ENCODE measurements at regions of chr10 and their contacts with region 1.

Region 1: DNA sequence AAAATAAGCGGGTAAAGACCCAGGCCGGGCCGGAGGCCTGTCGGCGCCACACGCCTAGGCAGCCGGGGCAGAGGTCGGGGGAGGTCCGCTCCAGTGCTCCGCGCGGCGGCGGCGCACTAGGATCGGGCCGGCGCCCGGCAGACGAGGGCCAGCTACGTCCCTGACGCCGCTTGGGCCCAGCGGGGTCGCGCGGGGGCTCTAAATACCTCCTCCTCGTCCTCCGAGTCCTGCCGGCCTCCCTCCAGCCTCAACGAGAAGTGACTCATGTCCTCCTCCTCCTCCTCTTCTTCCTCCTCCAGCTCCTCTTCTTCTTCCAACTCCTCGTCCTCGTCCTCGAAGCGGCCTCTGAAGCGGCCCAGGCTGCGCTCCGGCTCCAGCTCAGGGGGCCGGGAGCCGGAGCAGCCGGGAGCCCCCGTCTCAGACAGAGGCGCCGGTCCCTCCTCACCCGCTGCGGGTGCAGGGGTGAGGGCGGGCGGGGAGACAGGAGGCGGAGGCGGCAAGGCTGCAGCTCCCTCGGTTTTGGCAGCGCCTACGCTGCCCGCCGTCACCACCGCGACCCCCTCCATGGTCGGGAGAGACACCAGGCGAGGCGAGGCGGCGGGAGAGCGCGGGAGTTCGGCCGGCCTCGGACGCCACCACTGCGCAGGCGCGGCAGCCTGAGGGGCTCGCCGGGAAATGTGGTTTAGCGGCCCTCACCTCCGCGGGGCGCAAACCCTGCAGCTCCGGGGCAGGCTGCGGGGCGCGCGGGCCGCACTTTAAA is at the start of gene PCGF6:
- DNase-seq: no peak
- ATAC-seq: peak; percentile 97
- H3K4me3 ChIP-seq: peak within 1 kb of the TSS; percentile 66 to 80
- H3K27ac ChIP-seq: peak within 1 kb of the TSS; percentile 82
- H3K4me1 ChIP-seq: peaks cover 4% of the 10 kb centered on the region; the same call in 1 of the 2 replicates
- H3K27me3 ChIP-seq: no peaks in the 10 kb centered on the region
- CTCF ChIP-seq: no peak
- total RNA-seq, gene PCGF6: 18.0 TPM

Region 2: GRCh38 chr10:103154521-103155299 is 196.0 kb before region 1 on chr10:
- CTCF ChIA-PET with region 1: no interaction called
- POLR2A ChIA-PET with region 1: interaction called, 12 read pairs
- in situ Hi-C with region 1: no loop called
- intact Hi-C with region 1: no loop called
- DNase-seq: no peak
- ATAC-seq: peak; percentile 42
- H3K4me3 ChIP-seq: no peak overlapping the region
- H3K27ac ChIP-seq: peak overlapping the region; percentile 88
- H3K4me1 ChIP-seq: peaks cover 42% of the 10 kb centered on the region
- H3K27me3 ChIP-seq: no peaks in the 10 kb centered on the region
- CTCF ChIP-seq: no peak

Region 3: DNA sequence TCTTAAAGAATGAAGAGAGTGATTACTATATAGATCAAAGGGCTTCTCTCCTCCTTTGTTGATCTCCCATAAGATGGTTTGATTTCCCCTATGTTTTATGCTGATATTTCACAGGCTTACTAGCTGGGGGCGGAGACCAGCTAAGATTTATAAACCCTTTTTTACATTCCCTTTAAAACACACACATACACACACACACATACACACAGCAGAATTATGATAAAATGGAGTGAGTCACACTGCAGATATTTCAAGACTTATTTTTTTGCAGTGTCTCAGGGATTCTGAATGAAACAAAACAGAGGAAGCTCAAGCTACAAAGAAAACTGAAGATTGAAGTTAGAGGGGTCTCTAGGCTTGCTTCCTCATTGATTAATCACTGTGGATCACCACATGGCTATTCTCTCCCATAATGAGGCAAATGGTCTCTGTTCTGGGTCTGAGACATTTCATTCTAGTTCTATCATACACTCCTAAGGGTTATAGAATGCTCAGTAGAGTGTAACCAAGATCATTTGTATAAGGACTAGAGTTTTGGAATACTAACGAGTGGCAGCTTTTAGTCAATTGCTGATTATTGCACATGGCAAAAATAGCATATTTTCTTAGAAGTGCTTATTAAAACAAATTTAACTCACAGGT is 55.2 kb before region 1 on chr10:
- CTCF ChIA-PET with region 1: interaction called, 11 read pairs
- POLR2A ChIA-PET with region 1: no interaction called
- in situ Hi-C with region 1: no loop called
- intact Hi-C with region 1: no loop called
- DNase-seq: no peak
- ATAC-seq: no peak
- H3K4me3 ChIP-seq: no peak overlapping the region
- H3K27ac ChIP-seq: no peak overlapping the region
- H3K4me1 ChIP-seq: no peaks in the 10 kb centered on the region
- H3K27me3 ChIP-seq: no peaks in the 10 kb centered on the region; the same call in 1 of the 2 replicates
- CTCF ChIP-seq: no peak